ENCODE measurements at regions of chr6 and their contacts with region 1.

Region 1: GRCh38 chr6:159134701-159135364 is 34.4 kb upstream of the FNDC1 start:
- DNase-seq: peak; percentile 63
- ATAC-seq: peak; percentile 98
- H3K4me3 Mint-ChIP-seq: peak overlapping the region; percentile 61
- H3K27ac Mint-ChIP-seq: peak overlapping the region; percentile 80
- H3K4me1 Mint-ChIP-seq: peaks cover 20% of the 10 kb centered on the region
- H3K27me3 Mint-ChIP-seq: peaks cover 4% of the 10 kb centered on the region
- CTCF ChIP-seq: peak; percentile 72

Region 2: DNA sequence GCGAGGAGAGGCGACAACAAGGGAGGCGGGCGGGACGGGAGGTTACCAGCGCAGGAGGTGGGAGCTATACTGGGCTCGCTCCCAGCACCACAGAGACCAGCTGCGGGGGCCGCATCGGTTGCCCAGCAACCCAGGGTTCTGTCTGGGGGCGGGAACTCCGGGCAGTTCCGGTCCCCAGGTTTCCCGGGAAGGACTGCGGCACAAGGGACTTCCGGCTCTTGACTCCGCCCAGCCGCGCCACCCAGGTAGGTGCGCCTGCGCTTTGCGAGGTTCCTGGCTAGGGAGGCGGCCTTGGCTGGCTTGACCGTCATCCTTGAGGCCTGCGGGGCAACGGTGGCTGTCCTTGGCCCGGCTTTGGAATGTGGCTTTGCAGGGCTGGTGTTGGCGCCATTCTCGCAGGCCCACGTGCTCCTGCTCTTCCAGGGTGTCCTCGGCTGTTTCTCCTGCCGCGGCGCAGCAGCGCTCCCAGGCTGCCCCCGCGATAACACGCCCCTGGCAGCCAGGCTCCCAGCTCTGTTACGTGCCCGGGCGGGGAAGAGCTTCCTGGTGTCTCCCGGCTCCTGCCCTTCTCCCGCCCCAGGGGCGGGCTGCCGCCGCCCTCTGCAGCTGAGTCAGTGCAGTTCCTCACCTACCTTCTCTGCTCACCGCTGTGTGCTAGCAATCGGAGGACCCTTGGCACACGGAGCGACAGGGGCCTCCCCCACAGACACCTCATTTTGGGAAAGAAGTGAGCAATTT is 135.0 kb before region 1 on chr6 and contains the start of gene RSPH3:
- CTCF ChIA-PET with region 1: interaction called, 409 read pairs
- POLR2A ChIA-PET with region 1: interaction called, 5 read pairs
- intact Hi-C with region 1: no loop called
- DNase-seq: peak; percentile 87
- ATAC-seq: peak; percentile 90
- H3K4me3 Mint-ChIP-seq: peak within 1 kb of the TSS; percentile 94
- H3K27ac Mint-ChIP-seq: peak within 1 kb of the TSS; percentile 85
- H3K4me1 Mint-ChIP-seq: peaks cover 27% of the 10 kb centered on the region
- H3K27me3 Mint-ChIP-seq: no peaks in the 10 kb centered on the region
- CTCF ChIP-seq: no peak
- total RNA-seq, gene RSPH3: 1.9 and 2.4 TPM in 2 replicates

Region 3: DNA sequence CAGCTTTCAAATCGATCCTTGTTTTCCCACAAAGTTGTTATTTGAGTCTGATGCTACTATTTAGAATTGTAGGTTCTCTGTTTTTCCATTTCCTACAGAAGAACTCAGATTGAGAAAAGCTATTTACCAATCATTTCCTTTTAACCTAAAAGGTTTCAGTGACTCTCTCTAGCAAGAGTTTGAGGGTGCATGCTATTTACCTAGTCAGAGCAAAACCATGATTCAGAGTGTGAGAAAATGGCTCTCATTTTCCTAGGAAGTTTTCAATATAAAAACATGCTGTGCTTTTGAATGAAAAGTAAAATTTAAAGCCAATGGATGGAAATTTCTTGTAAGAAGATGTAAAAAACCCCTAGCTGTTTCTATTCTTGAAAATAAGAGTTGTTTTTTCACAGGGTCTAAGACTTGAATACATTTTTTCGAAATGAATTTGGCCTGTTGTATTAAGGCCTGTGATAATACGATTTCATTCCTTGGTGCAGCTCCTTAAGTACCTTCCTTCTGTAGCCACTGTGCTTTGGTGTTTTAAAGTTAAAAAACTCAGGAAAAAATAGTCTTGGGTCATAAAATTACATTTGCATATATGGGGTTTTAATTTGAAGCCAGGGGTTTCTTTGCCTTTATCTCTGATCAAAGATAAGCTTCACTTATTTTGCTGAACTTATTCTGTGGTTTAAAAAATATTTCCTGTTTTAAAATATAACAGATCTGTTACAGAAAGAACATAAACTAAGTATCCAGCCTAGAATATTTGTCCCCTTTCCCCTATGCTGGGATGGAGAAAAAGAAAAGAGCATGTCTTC is 116.9 kb before region 1 on chr6:
- CTCF ChIA-PET with region 1: interaction called, 409 read pairs
- POLR2A ChIA-PET with region 1: interaction called, 5 read pairs
- intact Hi-C with region 1: no loop called
- DNase-seq: no peak
- ATAC-seq: peak; percentile 34
- H3K4me3 Mint-ChIP-seq: no peak overlapping the region
- H3K27ac Mint-ChIP-seq: peak overlapping the region; percentile 50
- H3K4me1 Mint-ChIP-seq: peaks cover 37% of the 10 kb centered on the region
- H3K27me3 Mint-ChIP-seq: no peaks in the 10 kb centered on the region
- CTCF ChIP-seq: no peak

Region 4: GRCh38 chr6:159098636-159099106 is 36.2 kb before region 1 on chr6:
- CTCF ChIA-PET with region 1: interaction called, 113 read pairs
- POLR2A ChIA-PET with region 1: interaction called, 52 read pairs
- intact Hi-C with region 1: no loop called
- DNase-seq: peak; percentile 56
- ATAC-seq: peak; percentile 51
- H3K4me3 Mint-ChIP-seq: peak overlapping the region; percentile 81
- H3K27ac Mint-ChIP-seq: peak overlapping the region; percentile 99
- H3K4me1 Mint-ChIP-seq: peaks cover 93% of the 10 kb centered on the region
- H3K27me3 Mint-ChIP-seq: no peaks in the 10 kb centered on the region
- CTCF ChIP-seq: no peak

Region 5: DNA sequence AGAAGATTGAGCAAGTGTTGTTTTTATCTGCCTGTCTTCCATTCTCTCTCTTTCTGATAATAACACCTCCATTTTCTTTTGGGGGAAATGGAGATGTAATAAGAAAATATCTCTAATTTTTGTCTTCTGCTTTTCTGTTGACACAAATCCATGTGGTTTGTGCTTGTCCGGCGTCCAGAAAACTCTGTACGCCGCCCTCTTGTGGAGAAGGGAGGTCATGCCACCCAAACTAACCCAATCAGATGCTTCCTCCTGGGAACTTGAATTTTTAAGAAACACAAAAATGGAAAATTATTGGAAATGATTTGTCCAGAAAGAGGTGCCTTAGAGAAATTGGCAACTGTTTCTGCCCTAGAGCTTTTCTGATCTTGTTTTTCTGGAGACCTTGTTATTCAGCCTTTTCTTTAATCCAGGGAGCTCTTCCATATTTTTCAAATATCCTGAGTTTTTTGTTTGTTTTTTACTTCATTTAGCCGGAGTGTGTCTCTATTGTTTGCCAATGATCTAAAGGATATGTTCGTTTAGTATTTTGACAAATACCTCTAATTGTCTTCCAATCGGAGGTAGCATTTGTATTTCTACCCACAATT is 16.5 kb after region 1 on chr6:
- CTCF ChIA-PET with region 1: interaction called, 11 read pairs
- POLR2A ChIA-PET with region 1: no interaction called
- intact Hi-C with region 1: no loop called
- DNase-seq: no peak
- ATAC-seq: peak; percentile 79
- H3K4me3 Mint-ChIP-seq: no peak overlapping the region
- H3K27ac Mint-ChIP-seq: no peak overlapping the region
- H3K4me1 Mint-ChIP-seq: peaks cover 4% of the 10 kb centered on the region
- H3K27me3 Mint-ChIP-seq: peaks cover 7% of the 10 kb centered on the region
- CTCF ChIP-seq: peak; percentile 47

Measured in activated B cell treated with CpG ODN at 0.5 μM for 24 hours (primary cell).